ENCODE measurements at regions of chrX and their contacts with region 1.

Region 1: DNA sequence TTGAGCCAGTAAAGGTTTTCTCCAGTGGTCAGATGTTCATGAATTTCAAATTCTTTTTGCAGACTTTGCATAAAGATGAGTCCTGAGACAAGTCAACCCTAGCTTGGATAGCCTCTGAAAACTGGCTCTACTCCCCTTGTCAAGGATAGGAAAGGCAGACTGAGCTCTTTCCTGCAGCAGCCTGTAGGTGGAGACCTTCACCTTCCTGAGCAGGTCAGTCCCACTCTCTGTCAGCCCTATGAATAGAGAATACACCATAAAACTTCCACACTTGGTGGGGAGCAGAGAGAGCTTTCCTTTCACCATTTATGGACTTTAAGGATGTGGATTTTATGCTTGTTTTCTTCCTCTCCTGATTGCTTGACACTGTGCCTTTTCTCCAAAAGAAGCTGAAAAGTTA is 41.9 kb downstream of the PCDH19 start:
- DNase-seq: peak; percentile 18
- H3K4me3 Mint-ChIP-seq: no peak overlapping the region
- H3K27ac Mint-ChIP-seq: no peak overlapping the region
- H3K4me1 Mint-ChIP-seq: no peaks in the 10 kb centered on the region
- H3K27me3 Mint-ChIP-seq: peaks cover 2% of the 10 kb centered on the region

Region 2: GRCh38 chrX:100413229-100413628 is 45.1 kb after region 1 on chrX:
- CTCF ChIA-PET with region 1: interaction called, 15 read pairs
- intact Hi-C with region 1: loop called (anchors 1 kb)
- DNase-seq: peak; percentile 46
- H3K4me3 Mint-ChIP-seq: no peak overlapping the region
- H3K27ac Mint-ChIP-seq: no peak overlapping the region
- H3K4me1 Mint-ChIP-seq: peaks cover 13% of the 10 kb centered on the region
- H3K27me3 Mint-ChIP-seq: peaks cover 33% of the 10 kb centered on the region